ENCODE measurements at regions of chr7 and their contacts with region 1.

Region 1: GRCh38 chr7:873367-874002 is 2.9 kb upstream of the GET4 start:
- DNase-seq: peak; percentile 83 to 91
- ATAC-seq: peak; percentile 68
- H3K4me3 ChIP-seq: no peak overlapping the region
- H3K27ac ChIP-seq: peak overlapping the region in 1 of 2 donors; percentile 6
- H3K4me1 ChIP-seq: no peaks in the 10 kb centered on the region
- H3K27me3 ChIP-seq: no peaks in the 10 kb centered on the region

Region 2: DNA sequence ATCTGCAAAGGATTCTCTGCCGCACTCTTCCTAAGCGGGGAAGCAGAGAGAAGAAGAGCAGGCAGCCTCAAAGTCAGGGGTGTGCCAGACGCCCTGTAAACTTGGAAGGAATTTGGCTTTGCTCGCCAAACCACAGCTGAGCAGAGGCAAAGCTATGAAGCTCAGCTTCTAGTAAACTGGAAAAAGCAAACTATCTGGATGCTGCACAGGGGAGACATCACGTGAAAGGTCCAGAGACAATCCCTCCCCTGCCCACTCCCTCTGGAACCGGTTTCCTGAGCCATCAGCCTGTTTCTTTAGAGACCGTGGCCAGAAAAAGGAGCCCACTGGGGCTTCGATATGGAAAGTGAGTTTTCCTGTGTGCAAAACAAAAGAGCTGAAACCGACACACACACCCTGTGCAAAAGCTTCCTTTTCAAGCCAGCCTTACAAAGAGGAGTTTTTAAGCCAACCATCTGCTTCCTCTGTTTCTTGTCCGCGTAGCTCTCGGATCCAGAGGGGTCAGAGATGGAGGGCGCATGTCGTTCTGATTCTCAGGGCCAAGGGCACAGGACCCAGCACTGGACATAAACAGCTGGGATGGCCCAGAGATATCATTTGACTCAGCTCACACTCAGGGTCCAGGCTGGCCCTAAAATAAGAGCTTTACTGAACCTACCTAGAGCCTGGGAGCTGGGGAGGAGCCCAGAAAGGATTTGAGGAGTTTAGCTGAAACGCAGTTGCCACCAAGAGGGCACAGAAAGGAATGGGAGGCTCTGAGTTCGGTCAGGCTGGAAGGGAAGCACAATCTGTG is 205.2 kb before region 1 on chr7:
- intact Hi-C with region 1: no loop called
- DNase-seq: peak in 1 of 2 donors; percentile 28
- ATAC-seq: peak; percentile 34
- H3K4me3 ChIP-seq: no peak overlapping the region
- H3K27ac ChIP-seq: peak overlapping the region in 1 of 2 donors; percentile 45
- H3K4me1 ChIP-seq: peaks cover 0 to 3% of the 10 kb centered on the region in 2 donors
- H3K27me3 ChIP-seq: no peaks in the 10 kb centered on the region

Region 3: GRCh38 chr7:836411-837400 is 36.8 kb before region 1 on chr7:
- intact Hi-C with region 1: loop called (anchors 2 to 5 kb)
- DNase-seq: no peak
- ATAC-seq: no peak
- H3K4me3 ChIP-seq: no peak overlapping the region
- H3K27ac ChIP-seq: peak overlapping the region in 1 of 2 donors; percentile 76
- H3K4me1 ChIP-seq: no peaks in the 10 kb centered on the region
- H3K27me3 ChIP-seq: no peaks in the 10 kb centered on the region

Region 4: GRCh38 chr7:992709-993607 is 119.5 kb after region 1 on chr7:
- intact Hi-C with region 1: no loop called
- DNase-seq: peak; percentile 99 to 100
- ATAC-seq: peak; percentile 96
- H3K4me3 ChIP-seq: no peak overlapping the region
- H3K27ac ChIP-seq: no peak overlapping the region
- H3K4me1 ChIP-seq: no peaks in the 10 kb centered on the region
- H3K27me3 ChIP-seq: no peaks in the 10 kb centered on the region